H1 (cell line): ENCODE measurements at regions of chr10 and their contacts with region 1.

Region 1: GRCh38 chr10:102072673-102073527 is 7.8 kb downstream of the HPS6 start:
- DNase-seq: peak in 1 of 2 experiments; percentile 94
- H3K4me3 ChIP-seq: no peak overlapping the region
- H3K27ac ChIP-seq: no peak overlapping the region
- H3K4me1 ChIP-seq: 0 out of 7 replicates have a peak, but pooled peaks cover 0 to 2% (median 0%) of the 10 kb centered on the region in 4 experiments
- H3K27me3 ChIP-seq: no peaks in the 10 kb centered on the region; a peak in 1 of 7 replicates
- CTCF ChIP-seq: peak; percentile 89 to 95 (median 90)
- EP300 ChIP-seq: no peak
- POLR2A ChIP-seq: no peak
- RAD21 ChIP-seq: peak; percentile 86 to 89

Region 2: DNA sequence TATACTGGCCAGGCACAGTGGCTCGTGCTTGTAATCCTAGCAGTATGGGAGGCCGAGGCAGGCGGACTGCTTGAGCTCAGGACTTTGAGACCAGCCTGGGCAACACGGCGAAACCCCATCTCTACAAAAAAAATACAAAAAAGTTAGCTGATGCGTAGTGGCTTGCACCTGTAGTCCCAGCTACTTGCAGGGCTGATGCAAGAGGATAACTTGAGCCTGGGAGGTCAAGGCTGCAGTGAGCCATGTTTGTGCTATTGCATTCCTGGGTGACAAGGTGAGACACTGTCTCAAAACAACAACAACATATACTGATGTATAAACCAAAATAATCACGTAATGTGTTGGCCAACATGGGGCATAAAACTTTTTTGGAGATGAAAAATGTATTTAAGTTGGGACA is 283.2 kb before region 1 on chr10:
- CTCF ChIA-PET with region 1: no interaction called
- POLR2A ChIA-PET with region 1: no interaction called
- DNase-seq: no peak
- H3K4me3 ChIP-seq: no peak overlapping the region
- H3K27ac ChIP-seq: no peak overlapping the region
- H3K4me1 ChIP-seq: no peaks in the 10 kb centered on the region
- H3K27me3 ChIP-seq: no peaks in the 10 kb centered on the region
- CTCF ChIP-seq: no peak
- EP300 ChIP-seq: no peak
- POLR2A ChIP-seq: no peak
- RAD21 ChIP-seq: no peak

Region 3: GRCh38 chr10:102024799-102025198 is 48.1 kb before region 1 on chr10:
- CTCF ChIA-PET with region 1: interaction called, 14 read pairs
- POLR2A ChIA-PET with region 1: no interaction called
- DNase-seq: no peak
- H3K4me3 ChIP-seq: no peak overlapping the region
- H3K27ac ChIP-seq: no peak overlapping the region
- H3K4me1 ChIP-seq: no peaks in the 10 kb centered on the region
- H3K27me3 ChIP-seq: no peaks in the 10 kb centered on the region
- CTCF ChIP-seq: no peak
- EP300 ChIP-seq: no peak
- POLR2A ChIP-seq: no peak
- RAD21 ChIP-seq: no peak

Region 4: DNA sequence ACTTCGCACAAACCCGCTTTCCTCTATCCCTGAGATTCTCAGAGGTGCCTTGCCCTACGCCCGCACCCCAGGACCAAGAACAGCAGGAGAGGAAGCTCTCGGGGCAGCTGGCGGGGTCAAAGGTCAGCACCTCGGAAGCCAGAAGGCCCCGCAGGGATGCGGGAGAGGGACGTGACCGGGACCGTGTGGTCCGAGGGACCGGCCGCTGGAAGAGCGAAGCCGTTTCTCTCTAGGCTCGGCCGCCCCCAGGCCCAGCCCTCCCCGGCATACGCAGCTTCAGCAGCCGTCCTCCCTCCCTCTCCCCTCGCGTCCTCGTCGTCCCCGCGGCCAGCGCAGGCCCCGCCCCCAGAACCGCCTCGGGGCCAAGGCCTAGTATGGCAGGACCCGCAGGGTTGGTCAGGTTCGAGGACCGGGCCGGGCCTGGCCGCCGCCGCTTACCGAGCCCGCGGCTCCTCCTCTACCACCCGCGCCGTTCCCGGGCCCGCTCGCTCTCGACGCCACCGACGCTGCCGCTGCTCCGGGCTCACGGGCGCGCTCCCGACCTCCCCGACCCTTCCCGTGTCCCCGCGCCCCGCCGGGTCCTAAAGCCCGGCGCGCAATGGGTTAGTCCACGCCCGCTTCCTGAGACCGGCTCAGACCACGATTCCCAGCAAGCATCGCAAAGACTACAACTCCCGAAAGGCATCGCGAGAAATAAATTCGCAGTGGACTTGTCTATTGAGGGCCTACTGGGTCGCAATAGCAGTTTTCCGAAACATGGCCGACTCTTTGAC is 17.1 kb before region 1 on chr10 and contains the start of gene ARMH3:
- CTCF ChIA-PET with region 1: interaction called, 76 read pairs
- POLR2A ChIA-PET with region 1: interaction called, 13 read pairs
- DNase-seq: peak; percentile 80 to 90
- H3K4me3 ChIP-seq: peak within 1 kb of the TSS; percentile 80 to 92 (median 82)
- H3K27ac ChIP-seq: peak within 1 kb of the TSS; percentile 53; the same call in 1 of the 2 replicates
- H3K4me1 ChIP-seq: no peaks in the 10 kb centered on the region
- H3K27me3 ChIP-seq: no peaks in the 10 kb centered on the region
- CTCF ChIP-seq: 0 out of 4 replicates have a peak, but pooled peaks of 1 of the 3 experiments have one; percentile 8
- EP300 ChIP-seq: 0 out of 3 replicates have a peak, but pooled peaks of 1 of the 2 experiments have one; percentile 15
- POLR2A ChIP-seq: peak in 1 of 2 experiments; percentile 60; a peak in 2 of 3 replicates
- RAD21 ChIP-seq: no peak
- total RNA-seq, gene ARMH3: 16.1 and 18.3 TPM in 2 replicates

Region 5: DNA sequence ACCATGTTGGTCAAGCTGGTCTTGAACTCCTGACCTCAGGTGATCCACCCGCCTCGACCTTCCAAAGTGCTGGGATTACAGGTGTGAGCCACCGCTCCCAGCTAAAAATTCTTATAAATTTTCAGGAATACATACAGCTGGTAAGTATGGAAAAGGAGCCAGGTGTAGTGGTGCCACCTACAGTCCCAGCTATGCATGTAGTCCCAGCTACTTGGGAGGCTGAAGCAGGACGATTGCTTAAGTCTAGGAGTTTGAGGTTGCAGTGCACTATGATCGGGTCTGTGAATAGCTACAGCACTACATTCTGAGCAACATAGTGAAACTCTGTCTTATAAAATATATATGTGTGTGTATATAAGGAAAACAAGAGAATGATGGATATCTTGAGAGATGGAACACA is 28.3 kb after region 1 on chr10:
- CTCF ChIA-PET with region 1: interaction called, 15 read pairs
- POLR2A ChIA-PET with region 1: interaction called, 3 read pairs
- DNase-seq: no peak
- H3K4me3 ChIP-seq: no peak overlapping the region
- H3K27ac ChIP-seq: no peak overlapping the region
- H3K4me1 ChIP-seq: no peaks in the 10 kb centered on the region
- H3K27me3 ChIP-seq: no peaks in the 10 kb centered on the region
- CTCF ChIP-seq: peak in 2 of 3 experiments; percentile 13 to 28; a peak in 2 of 4 replicates
- EP300 ChIP-seq: no peak
- POLR2A ChIP-seq: no peak
- RAD21 ChIP-seq: peak; percentile 4 to 33; a peak in 1 of 4 replicates

Region 6: GRCh38 chr10:102114861-102115618 is 42.1 kb after region 1 on chr10:
- CTCF ChIA-PET with region 1: interaction called, 33 read pairs
- POLR2A ChIA-PET with region 1: interaction called, 5 read pairs
- DNase-seq: peak in 1 of 2 experiments; percentile 85
- H3K4me3 ChIP-seq: peak overlapping the region; percentile 46 to 96 (median 69)
- H3K27ac ChIP-seq: peak overlapping the region; percentile 59; the same call in 1 of the 2 replicates
- H3K4me1 ChIP-seq: peaks cover 22 to 48% (median 31%) of the 10 kb centered on the region in 4 experiments
- H3K27me3 ChIP-seq: no peaks in the 10 kb centered on the region
- CTCF ChIP-seq: no peak
- EP300 ChIP-seq: no peak
- POLR2A ChIP-seq: peak; percentile 78 to 88
- RAD21 ChIP-seq: no peak